HepG2 (cell line): ENCODE measurements at regions of chr14 and their contacts with region 1.

Region 1: GRCh38 chr14:55701638-55702037 is 121.6 kb downstream of the KTN1 start:
- DNase-seq: no peak
- ATAC-seq: no peak
- H3K4me3 ChIP-seq: no peak overlapping the region
- H3K27ac ChIP-seq: no peak overlapping the region
- H3K4me1 ChIP-seq: no peaks in the 10 kb centered on the region
- H3K27me3 ChIP-seq: no peaks in the 10 kb centered on the region
- CTCF ChIP-seq: no peak
- EP300 ChIP-seq: no peak
- POLR2A ChIP-seq: no peak
- RAD21 ChIP-seq: no peak

Region 2: GRCh38 chr14:55562135-55562534 is 139.5 kb before region 1 on chr14:
- CTCF ChIA-PET with region 1: no interaction called
- POLR2A ChIA-PET with region 1: no interaction called
- in situ Hi-C with region 1: no loop called
- intact Hi-C with region 1: no loop called
- DNase-seq: no peak
- ATAC-seq: no peak
- H3K4me3 ChIP-seq: no peak overlapping the region
- H3K27ac ChIP-seq: no peak overlapping the region
- H3K4me1 ChIP-seq: no peaks in the 10 kb centered on the region
- H3K27me3 ChIP-seq: no peaks in the 10 kb centered on the region
- CTCF ChIP-seq: no peak
- EP300 ChIP-seq: no peak
- POLR2A ChIP-seq: no peak
- RAD21 ChIP-seq: no peak

Region 3: GRCh38 chr14:55624913-55625312 is 76.7 kb before region 1 on chr14:
- CTCF ChIA-PET with region 1: no interaction called
- POLR2A ChIA-PET with region 1: no interaction called
- in situ Hi-C with region 1: no loop called
- intact Hi-C with region 1: no loop called
- DNase-seq: no peak
- ATAC-seq: no peak
- H3K4me3 ChIP-seq: no peak overlapping the region
- H3K27ac ChIP-seq: no peak overlapping the region
- H3K4me1 ChIP-seq: no peaks in the 10 kb centered on the region
- H3K27me3 ChIP-seq: no peaks in the 10 kb centered on the region
- CTCF ChIP-seq: no peak
- EP300 ChIP-seq: no peak
- POLR2A ChIP-seq: no peak
- RAD21 ChIP-seq: no peak

Region 4: DNA sequence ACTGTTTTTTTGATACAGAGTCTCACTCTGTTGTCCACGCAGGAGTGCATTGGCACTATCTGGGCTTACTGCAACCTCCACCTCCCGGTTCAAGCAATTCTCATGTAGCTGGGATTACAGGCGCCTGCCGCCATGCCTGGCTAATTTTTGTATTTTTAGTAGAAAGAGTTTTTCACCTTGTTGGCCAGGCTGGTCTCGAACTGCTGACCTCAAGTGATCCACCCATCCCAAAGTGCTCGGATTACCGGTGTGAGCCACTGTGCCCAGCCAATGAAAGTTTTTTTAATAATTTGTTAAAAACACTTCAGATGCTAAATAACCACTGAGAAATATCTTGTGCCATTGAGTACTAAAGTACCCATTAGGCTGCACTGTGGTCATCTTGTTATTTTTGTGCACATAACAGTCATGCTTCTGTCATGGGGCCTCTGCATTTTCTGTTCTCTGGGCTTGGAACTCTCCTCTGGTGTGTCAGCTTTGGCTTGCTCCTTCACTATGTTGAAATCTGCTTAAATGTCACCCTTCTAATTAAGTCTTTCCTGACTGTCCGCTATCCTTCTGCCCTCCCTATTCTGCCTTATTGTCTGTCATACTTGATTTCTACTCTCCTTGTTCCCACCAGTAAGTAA is 16.6 kb before region 1 on chr14:
- CTCF ChIA-PET with region 1: no interaction called
- POLR2A ChIA-PET with region 1: no interaction called
- in situ Hi-C with region 1: no loop called
- intact Hi-C with region 1: loop called (anchors 1 kb)
- DNase-seq: no peak
- ATAC-seq: no peak
- H3K4me3 ChIP-seq: no peak overlapping the region
- H3K27ac ChIP-seq: no peak overlapping the region
- H3K4me1 ChIP-seq: no peaks in the 10 kb centered on the region
- H3K27me3 ChIP-seq: no peaks in the 10 kb centered on the region
- CTCF ChIP-seq: no peak
- EP300 ChIP-seq: no peak
- POLR2A ChIP-seq: no peak
- RAD21 ChIP-seq: no peak

Region 5: GRCh38 chr14:55807059-55807499 is 105.4 kb after region 1 on chr14:
- CTCF ChIA-PET with region 1: no interaction called
- POLR2A ChIA-PET with region 1: no interaction called
- in situ Hi-C with region 1: no loop called
- intact Hi-C with region 1: no loop called
- DNase-seq: peak; percentile 28
- ATAC-seq: peak; percentile 66
- H3K4me3 ChIP-seq: no peak overlapping the region
- H3K27ac ChIP-seq: no peak overlapping the region
- H3K4me1 ChIP-seq: peaks cover 25% of the 10 kb centered on the region
- H3K27me3 ChIP-seq: no peaks in the 10 kb centered on the region
- CTCF ChIP-seq: no peak
- EP300 ChIP-seq: no peak
- POLR2A ChIP-seq: no peak
- RAD21 ChIP-seq: no peak